T-cell (primary cell): ENCODE measurements at regions of chr10 and their contacts with region 1.

Region 1: GRCh38 chr10:119470920-119471702 is 71.4 kb downstream of the RGS10 start:
- DNase-seq: no peak
- ATAC-seq: no peak
- H3K4me3 ChIP-seq: no peak overlapping the region
- H3K4me3 Mint-ChIP-seq: no peak overlapping the region
- H3K27ac ChIP-seq: no peak overlapping the region
- H3K27ac Mint-ChIP-seq: no peak overlapping the region
- H3K4me1 ChIP-seq: peaks cover 0 to 10% of the 10 kb centered on the region in 2 experiments
- H3K4me1 Mint-ChIP-seq: peaks cover 6 to 13% (median 9%) of the 10 kb centered on the region in 3 donors
- H3K27me3 ChIP-seq: peaks cover 0 to under 1% of the 10 kb centered on the region in 2 experiments
- H3K27me3 Mint-ChIP-seq: no peaks in the 10 kb centered on the region

Region 2: GRCh38 chr10:119355930-119356329 is 115.2 kb before region 1 on chr10:
- CTCF ChIA-PET with region 1: no interaction called
- POLR2A ChIA-PET with region 1: no interaction called
- DNase-seq: peak in 1 of 35 experiments; percentile 16
- ATAC-seq: no peak
- H3K4me3 ChIP-seq: no peak overlapping the region
- H3K4me3 Mint-ChIP-seq: no peak overlapping the region
- H3K27ac ChIP-seq: no peak overlapping the region
- H3K27ac Mint-ChIP-seq: no peak overlapping the region
- H3K4me1 ChIP-seq: peaks cover 0 to 15% of the 10 kb centered on the region in 2 experiments
- H3K4me1 Mint-ChIP-seq: peaks cover 8 to 20% (median 13%) of the 10 kb centered on the region in 3 donors
- H3K27me3 ChIP-seq: no peaks in the 10 kb centered on the region
- H3K27me3 Mint-ChIP-seq: no peaks in the 10 kb centered on the region

Region 3: DNA sequence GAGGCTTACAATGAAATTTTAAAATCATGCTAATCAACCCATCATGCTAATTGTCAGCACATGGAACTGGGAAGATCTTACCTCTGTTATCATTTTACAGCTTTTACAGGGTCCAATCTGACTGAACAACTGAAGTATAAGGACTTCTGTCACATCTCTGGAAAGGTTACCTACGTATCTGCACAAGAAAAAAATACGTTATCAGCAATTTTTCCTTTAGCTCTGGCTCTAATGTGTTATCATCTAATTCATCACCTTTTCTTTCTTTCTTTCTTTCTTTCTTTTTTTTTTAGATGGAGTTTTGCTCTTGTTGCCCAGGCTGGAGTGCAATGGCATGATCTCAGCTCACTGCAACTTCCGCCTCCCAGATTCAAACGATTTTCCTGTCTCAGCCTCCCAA is 117.0 kb after region 1 on chr10:
- CTCF ChIA-PET with region 1: interaction called in 1 of 2 experiments, 19 read pairs
- POLR2A ChIA-PET with region 1: no interaction called
- DNase-seq: no peak
- ATAC-seq: no peak
- H3K4me3 ChIP-seq: no peak overlapping the region
- H3K4me3 Mint-ChIP-seq: no peak overlapping the region
- H3K27ac ChIP-seq: no peak overlapping the region
- H3K27ac Mint-ChIP-seq: no peak overlapping the region
- H3K4me1 ChIP-seq: peaks cover 3 to 9% of the 10 kb centered on the region in 2 experiments
- H3K4me1 Mint-ChIP-seq: peaks cover 30 to 50% (median 49%) of the 10 kb centered on the region in 3 donors
- H3K27me3 ChIP-seq: no peaks in the 10 kb centered on the region
- H3K27me3 Mint-ChIP-seq: no peaks in the 10 kb centered on the region

Region 4: DNA sequence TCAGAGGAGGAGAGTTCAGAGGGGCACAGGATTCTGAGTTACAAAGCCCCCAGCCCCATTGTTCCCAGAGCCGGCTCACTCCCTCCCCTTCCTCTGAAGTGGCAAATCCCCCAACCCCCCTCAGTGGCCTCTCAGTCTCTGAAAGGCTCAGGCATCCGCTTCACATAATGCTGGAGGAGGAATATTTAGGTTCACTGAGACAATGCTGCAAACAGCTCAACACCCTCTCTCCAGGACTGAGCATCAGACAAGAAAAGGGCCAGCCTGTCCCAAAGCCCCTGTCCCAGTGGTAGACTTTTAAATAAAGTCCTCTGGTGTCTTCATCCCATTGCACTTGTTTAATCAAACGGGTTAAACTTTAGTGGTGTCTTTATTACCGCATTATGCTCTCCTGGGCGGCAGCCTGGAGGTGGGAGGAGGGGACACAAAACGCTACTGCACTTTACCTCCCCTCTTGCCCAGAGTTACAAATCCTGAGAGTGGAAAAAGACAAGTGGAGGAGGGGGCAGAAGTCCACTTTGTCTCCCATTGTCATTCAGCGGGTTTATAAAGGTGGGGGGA is 1869.2 kb after region 1 on chr10:
- CTCF ChIA-PET with region 1: no interaction called
- POLR2A ChIA-PET with region 1: no interaction called
- DNase-seq: no peak
- ATAC-seq: no peak
- H3K4me3 ChIP-seq: no peak overlapping the region
- H3K4me3 Mint-ChIP-seq: no peak overlapping the region
- H3K27ac ChIP-seq: no peak overlapping the region
- H3K27ac Mint-ChIP-seq: no peak overlapping the region
- H3K4me1 ChIP-seq: no peaks in the 10 kb centered on the region
- H3K4me1 Mint-ChIP-seq: no peaks in the 10 kb centered on the region
- H3K27me3 ChIP-seq: no peaks in the 10 kb centered on the region
- H3K27me3 Mint-ChIP-seq: peaks cover 2 to 10% of the 10 kb centered on the region in 2 donors